ENCODE measurements at regions of chr20 and their contacts with region 1.

Region 1: GRCh38 chr20:47389867-47390347 is 33.4 kb upstream of the ZMYND8 start:
- DNase-seq: no peak
- H3K4me3 ChIP-seq: no peak overlapping the region
- H3K27ac ChIP-seq: no peak overlapping the region
- H3K4me1 ChIP-seq: peaks cover 6% of the 10 kb centered on the region
- H3K27me3 ChIP-seq: no peaks in the 10 kb centered on the region
- CTCF ChIP-seq: no peak

Region 2: GRCh38 chr20:47205577-47206498 is 184.1 kb before region 1 on chr20:
- intact Hi-C with region 1: loop called (anchors 10 kb)
- DNase-seq: peak; percentile 79
- H3K4me3 ChIP-seq: no peak overlapping the region
- H3K27ac ChIP-seq: no peak overlapping the region
- H3K4me1 ChIP-seq: peaks cover 17% of the 10 kb centered on the region
- H3K27me3 ChIP-seq: no peaks in the 10 kb centered on the region
- CTCF ChIP-seq: peak; percentile 89

Region 3: DNA sequence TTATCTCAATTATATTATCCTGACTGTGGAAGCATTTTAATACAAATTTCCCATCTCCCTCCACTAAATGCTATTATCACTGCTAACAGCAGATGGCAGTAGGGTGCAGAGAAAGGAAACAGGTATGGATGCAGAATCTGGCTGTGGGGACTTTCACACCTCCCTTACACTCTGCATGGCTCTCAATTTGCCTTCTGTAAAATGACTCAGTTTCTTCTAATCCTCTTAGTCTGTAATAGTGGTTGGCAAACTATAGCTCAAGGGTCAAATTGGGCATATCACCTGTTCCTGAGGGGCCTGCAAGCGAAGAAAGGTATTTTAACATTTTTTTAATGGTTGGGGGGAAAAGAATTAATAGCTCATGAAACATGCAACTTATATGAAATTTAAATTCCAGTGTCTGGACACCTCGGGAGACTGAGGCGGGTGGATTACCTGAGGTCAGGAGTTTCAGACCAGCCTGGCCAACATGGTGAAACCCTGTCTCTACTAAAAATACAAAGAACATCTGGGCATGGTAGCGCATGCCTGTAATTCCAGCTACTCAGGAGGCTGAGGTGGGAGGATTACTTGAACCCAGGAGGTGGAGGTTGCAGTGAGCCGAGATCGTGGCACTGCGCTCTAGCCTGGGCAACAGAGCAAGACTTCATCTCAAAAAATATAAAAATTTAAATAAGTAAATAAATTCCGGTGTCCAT is 116.9 kb before region 1 on chr20:
- intact Hi-C with region 1: loop called (anchors 2 kb)
- DNase-seq: no peak
- H3K4me3 ChIP-seq: no peak overlapping the region
- H3K27ac ChIP-seq: peak overlapping the region; percentile 72
- H3K4me1 ChIP-seq: peaks cover 56% of the 10 kb centered on the region
- H3K27me3 ChIP-seq: no peaks in the 10 kb centered on the region
- CTCF ChIP-seq: peak; percentile 91

Measured in left ventricle myocardium inferior (tissue), 1 donor.